MCF 10A (cell line): ENCODE measurements at regions of chr7 and their contacts with region 1.

Region 1: DNA sequence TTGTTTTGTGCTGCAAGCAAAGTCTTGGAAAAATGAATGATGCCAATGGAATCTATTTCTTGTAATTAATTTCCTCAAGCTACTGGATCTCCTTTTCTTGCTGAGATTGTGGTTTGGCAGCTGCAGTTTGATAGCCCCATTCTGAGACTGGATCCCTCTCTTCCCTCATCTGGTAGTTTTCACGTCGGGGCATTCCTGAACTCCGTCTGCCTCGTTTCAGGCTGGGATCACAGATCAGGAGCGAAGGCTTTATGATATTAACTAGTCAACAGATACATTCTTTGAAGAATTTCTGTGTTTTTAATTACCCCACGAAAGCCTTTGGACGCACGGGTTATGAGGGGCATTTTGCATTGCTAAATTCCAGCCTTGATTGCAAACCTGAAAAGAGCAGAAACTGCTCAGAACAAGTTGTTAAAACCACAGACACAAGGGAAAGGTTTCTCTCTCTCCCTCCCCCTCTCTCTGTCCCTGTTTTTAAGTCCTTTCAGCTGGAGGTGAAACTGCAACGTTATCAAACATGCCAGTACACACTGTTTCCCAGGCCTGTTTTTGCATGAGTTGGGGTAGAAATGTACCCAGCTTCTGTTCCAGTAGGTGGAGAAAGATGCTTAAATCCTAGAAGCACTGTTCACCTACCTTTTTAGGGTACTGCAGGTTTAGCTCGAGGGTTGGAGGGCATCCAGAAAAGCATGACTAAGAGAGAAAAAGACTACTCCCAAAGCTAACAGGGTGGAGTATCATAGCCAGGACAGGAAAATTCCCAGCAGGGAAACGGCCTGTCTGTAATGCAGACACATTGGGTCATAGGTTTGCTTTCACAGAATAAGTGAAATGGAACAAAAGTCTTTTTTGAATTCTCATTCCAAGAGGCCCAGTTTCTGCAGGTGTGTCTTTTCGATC is 124.3 kb downstream of the CUX1 start:
- DNase-seq: peak; percentile 96
- H3K4me3 Mint-ChIP-seq: peak overlapping the region; percentile 45
- H3K27ac Mint-ChIP-seq: peak overlapping the region; percentile 64
- H3K4me1 Mint-ChIP-seq: peaks cover 23% of the 10 kb centered on the region
- H3K27me3 Mint-ChIP-seq: no peaks in the 10 kb centered on the region
- CTCF ChIP-seq: no peak

Region 2: GRCh38 chr7:101856473-101857357 is 85.0 kb before region 1 on chr7:
- CTCF ChIA-PET with region 1: interaction called, 3 read pairs
- POLR2A ChIA-PET with region 1: interaction called, 3 read pairs
- intact Hi-C with region 1: loop called (anchors 2 kb)
- DNase-seq: peak; percentile 95
- H3K4me3 Mint-ChIP-seq: peak overlapping the region; percentile 70
- H3K27ac Mint-ChIP-seq: peak overlapping the region; percentile 74
- H3K4me1 Mint-ChIP-seq: peaks cover 32% of the 10 kb centered on the region
- H3K27me3 Mint-ChIP-seq: no peaks in the 10 kb centered on the region
- CTCF ChIP-seq: peak; percentile 53

Region 3: DNA sequence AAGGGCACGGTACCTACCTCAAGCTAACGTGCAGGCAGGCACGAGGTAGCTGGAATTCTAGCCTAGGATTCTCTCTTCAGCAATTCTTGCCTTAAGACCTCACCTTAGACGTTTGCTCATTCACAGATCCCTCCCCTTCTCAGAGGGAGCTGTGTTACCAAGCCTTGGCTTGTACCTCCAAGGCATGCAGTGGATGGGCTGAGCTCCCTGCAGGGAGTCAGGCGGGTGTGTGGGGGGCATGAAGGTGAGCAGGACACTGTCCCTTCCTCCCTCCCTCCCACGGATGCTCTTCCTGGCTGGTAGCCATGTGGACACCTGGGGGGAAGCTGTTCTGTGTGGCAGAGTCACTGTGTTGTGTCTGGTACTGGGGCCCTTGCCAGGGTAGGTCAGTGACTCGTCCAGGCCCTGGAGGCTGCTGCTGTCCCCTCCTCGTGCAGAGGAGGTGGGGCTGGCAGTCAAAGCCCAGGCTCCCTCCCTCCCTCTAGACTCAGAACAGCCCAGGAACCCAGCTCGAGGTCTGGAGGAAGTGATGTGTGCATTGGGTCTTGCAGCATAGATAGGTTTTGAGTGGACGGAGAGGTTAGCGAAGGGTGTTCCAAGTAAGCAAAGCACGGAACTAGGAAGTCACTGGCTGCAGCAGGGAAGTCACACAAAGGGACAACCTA is 122.8 kb after region 1 on chr7:
- CTCF ChIA-PET with region 1: interaction called, 4 read pairs
- POLR2A ChIA-PET with region 1: interaction called, 5 read pairs
- intact Hi-C with region 1: loop called (anchors 1 kb)
- DNase-seq: peak; percentile 84
- H3K4me3 Mint-ChIP-seq: peak overlapping the region; percentile 55
- H3K27ac Mint-ChIP-seq: peak overlapping the region; percentile 92
- H3K4me1 Mint-ChIP-seq: peaks cover 19% of the 10 kb centered on the region
- H3K27me3 Mint-ChIP-seq: no peaks in the 10 kb centered on the region
- CTCF ChIP-seq: no peak

Region 4: DNA sequence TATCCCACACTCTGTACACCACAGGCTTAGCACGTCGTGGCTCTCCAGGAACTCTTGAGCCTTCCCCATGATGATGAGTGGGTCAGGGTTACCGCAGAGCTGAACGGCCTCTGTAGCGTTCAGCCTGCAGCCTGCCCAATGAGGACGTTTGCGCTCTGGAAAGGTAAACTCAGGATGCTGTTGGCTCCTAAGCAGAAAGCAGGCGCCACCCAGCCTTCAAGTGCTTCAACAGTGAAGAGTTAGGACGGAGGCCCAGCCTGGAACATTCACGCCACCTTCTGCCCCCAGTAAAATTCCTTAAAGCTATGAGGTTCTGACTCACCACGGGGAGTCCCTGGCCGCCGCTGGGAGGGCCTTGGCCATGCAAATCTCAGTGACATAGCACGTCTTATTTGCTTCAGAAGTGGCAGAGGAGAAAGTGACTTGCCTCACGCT is 183.4 kb after region 1 on chr7:
- CTCF ChIA-PET with region 1: no interaction called
- POLR2A ChIA-PET with region 1: no interaction called
- intact Hi-C with region 1: loop called (anchors 1 kb)
- DNase-seq: peak; percentile 89
- H3K4me3 Mint-ChIP-seq: no peak overlapping the region
- H3K27ac Mint-ChIP-seq: no peak overlapping the region
- H3K4me1 Mint-ChIP-seq: peaks cover 4% of the 10 kb centered on the region
- H3K27me3 Mint-ChIP-seq: no peaks in the 10 kb centered on the region
- CTCF ChIP-seq: no peak